Endothelial cell of umbilical vein (primary cell): ENCODE measurements at regions of chr15 and their contacts with region 1.

Region 1: DNA sequence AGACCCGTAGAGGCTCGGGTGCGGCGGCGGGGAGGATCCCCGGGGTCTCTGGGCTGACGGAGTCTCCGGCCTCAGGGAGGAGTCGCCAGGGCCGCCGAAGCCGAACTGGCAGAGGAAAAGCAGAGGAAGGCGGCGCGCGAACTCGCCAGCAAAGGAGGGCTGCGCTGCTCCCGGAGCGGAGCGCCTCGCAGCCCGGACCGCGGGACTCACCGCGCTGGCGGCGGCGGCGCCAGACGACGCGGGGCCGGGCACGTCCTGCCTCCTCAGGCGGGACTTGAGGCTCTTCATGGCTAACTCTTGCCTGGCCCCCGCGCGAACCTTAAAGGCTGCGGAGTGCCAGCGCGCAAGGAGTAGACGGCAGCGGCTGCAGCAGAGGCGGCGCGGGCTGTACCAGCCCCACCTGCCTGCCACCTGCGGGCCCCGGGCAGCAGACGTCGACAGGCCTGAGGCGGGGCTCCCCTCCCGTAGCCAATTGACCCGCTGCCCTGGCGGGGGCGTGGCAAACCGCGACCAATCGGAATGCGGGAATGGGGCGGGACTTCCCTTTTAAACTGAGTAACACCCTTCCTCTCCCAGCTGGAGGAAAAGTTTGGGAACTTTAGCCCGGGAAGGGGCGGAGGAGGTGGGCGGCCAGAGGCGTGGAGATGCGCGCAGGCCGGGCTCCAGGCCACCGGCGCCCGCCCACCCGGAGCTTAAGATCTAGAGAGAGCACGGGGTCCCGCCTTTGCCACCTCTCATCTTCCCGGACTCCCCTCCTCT is at the start of gene UACA:
- DNase-seq: peak; percentile 99
- H3K4me3 ChIP-seq: peak within 1 kb of the TSS; percentile 71 to 90 (median 89)
- H3K27ac ChIP-seq: peak within 1 kb of the TSS; percentile 83
- H3K4me1 ChIP-seq: peaks cover 32% of the 10 kb centered on the region
- H3K27me3 ChIP-seq: no peaks in the 10 kb centered on the region
- CTCF ChIP-seq: no peak
- POLR2A ChIP-seq: peak; percentile 91
- total RNA-seq, gene UACA: 270 and 292 TPM in 2 replicates

Region 2: DNA sequence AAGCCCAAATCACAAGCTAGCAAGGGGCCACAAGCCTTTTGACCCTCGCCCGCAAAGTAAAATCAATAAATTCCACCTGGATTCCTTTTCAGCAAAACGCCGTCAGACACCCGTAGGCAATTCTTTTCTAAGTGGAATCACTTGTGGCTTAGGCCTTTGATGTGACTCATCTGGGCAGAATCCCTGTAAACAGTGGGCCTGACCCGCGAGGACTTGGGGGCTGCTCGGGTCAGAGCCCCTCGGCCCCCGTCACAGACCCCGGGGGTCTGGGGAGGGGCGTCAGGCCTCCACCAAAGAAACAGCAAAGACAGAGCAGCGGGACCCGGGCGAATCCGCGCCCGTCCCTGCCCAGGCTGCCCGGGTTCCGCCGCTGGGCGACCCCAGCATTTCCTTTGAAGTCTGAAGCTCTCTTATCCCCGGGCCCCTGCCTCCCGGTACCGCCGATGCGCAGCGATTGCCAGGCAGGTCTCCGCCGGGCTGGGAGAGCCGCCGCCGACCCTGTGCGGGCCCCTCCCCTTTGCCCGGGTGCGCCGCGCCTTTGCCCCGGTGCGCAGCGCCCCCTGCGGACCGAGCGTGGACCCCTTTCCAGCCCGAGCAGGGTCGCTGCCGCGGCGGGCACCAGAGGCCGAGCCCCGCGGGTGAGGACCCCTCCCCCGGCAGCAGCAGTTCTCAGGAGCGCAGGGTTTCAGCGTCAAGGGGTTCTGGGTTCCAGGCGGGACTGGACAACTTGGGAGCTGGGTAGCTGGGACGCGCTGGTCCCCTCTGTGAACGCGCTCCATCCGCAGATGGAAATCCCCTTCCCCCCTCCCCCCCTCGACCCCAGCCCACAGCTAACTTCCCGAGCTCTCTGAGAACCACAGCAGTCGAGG is 178.2 kb before region 1 on chr15:
- CTCF ChIA-PET with region 1: no interaction called
- POLR2A ChIA-PET with region 1: no interaction called
- dilution Hi-C with region 1: no loop called
- intact Hi-C with region 1: no loop called
- DNase-seq: no peak
- H3K4me3 ChIP-seq: no peak overlapping the region
- H3K27ac ChIP-seq: no peak overlapping the region
- H3K4me1 ChIP-seq: no peaks in the 10 kb centered on the region
- H3K27me3 ChIP-seq: peaks cover 15 to 27% of the 10 kb centered on the region in 2 experiments
- CTCF ChIP-seq: peak; percentile 56 to 58
- POLR2A ChIP-seq: no peak

Region 3: DNA sequence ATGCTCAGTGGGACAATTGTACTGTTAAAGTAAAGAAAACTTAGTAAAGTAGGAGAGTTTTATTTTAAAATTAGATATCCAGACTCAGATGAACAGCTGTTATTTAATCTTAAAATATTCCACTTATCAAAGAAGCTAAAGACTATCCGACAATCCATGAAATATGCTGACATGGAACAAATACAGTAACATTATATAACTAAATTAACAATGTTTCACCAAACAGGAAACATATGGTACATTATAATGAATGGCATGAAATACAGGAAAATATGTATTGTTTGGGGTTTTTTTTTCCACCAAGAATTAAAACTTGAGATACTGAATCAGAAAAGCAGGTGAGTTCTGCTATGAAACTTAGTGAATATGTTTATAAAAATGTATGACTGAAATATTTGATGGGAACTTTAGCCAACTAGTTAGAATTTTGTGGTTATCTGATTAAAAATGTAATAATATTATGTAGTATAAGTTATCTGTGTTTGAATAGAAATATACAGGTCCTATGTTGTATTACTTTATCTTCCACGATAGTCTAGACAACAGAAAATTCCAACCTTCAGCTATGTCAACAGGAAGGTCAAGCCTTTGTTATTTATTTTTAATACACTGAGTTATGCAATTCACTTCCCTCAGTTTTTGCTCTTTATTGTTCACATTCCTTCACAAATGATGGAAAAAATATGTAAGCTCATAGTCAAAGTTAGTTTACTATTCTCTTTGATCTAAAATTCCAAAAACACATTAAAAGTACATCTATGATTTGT is 72.6 kb before region 1 on chr15:
- CTCF ChIA-PET with region 1: no interaction called
- POLR2A ChIA-PET with region 1: no interaction called
- dilution Hi-C with region 1: no loop called
- intact Hi-C with region 1: loop called (anchors 2 kb)
- DNase-seq: peak; percentile 82
- H3K4me3 ChIP-seq: peak overlapping the region in 1 of 3 experiments; percentile 38
- H3K27ac ChIP-seq: peak overlapping the region; percentile 67
- H3K4me1 ChIP-seq: peaks cover 45% of the 10 kb centered on the region
- H3K27me3 ChIP-seq: no peaks in the 10 kb centered on the region
- CTCF ChIP-seq: no peak
- POLR2A ChIP-seq: no peak

Region 4: GRCh38 chr15:70741107-70741531 is 22.2 kb before region 1 on chr15:
- CTCF ChIA-PET with region 1: interaction called, 7 read pairs
- POLR2A ChIA-PET with region 1: no interaction called
- dilution Hi-C with region 1: no loop called
- intact Hi-C with region 1: loop called (anchors 1 kb)
- DNase-seq: peak; percentile 78
- H3K4me3 ChIP-seq: no peak overlapping the region
- H3K27ac ChIP-seq: peak overlapping the region; percentile 66
- H3K4me1 ChIP-seq: peaks cover 27% of the 10 kb centered on the region
- H3K27me3 ChIP-seq: no peaks in the 10 kb centered on the region
- CTCF ChIP-seq: no peak
- POLR2A ChIP-seq: no peak

Region 5: DNA sequence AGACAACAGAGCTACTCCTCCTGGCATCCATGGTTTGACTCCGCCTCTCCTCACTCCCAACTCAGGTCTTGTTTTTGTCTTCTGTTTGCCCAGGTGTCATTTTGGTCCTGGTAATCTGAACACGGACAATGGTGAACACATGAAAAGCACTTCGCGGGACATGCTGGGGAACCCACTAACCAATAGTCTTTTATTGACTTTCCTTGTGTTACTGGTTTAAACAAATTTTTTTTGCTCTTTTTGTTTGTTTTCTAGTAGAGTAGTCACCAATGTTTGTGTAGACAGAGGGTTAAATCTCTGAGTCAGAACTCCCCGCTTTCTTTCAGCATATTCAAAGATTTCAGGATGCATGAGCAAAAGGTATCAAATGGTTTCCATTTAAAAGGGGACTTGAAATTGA is 52.3 kb after region 1 on chr15:
- CTCF ChIA-PET with region 1: interaction called, 39 read pairs
- POLR2A ChIA-PET with region 1: no interaction called
- dilution Hi-C with region 1: no loop called
- intact Hi-C with region 1: loop called (anchors 1 kb)
- DNase-seq: no peak
- H3K4me3 ChIP-seq: no peak overlapping the region
- H3K27ac ChIP-seq: no peak overlapping the region
- H3K4me1 ChIP-seq: peaks cover 9% of the 10 kb centered on the region
- H3K27me3 ChIP-seq: no peaks in the 10 kb centered on the region
- CTCF ChIP-seq: no peak
- POLR2A ChIP-seq: no peak